PC-9 (cell line): ENCODE measurements at regions of chr2 and their contacts with region 1.

Region 1: GRCh38 chr2:166067229-166067628 is 60.6 kb downstream of the SCN1A start:
- DNase-seq: no peak
- H3K4me3 ChIP-seq: no peak overlapping the region
- H3K27ac ChIP-seq: no peak overlapping the region
- H3K4me1 ChIP-seq: no peaks in the 10 kb centered on the region
- H3K27me3 ChIP-seq: no peaks in the 10 kb centered on the region
- CTCF ChIP-seq: no peak

Region 2: DNA sequence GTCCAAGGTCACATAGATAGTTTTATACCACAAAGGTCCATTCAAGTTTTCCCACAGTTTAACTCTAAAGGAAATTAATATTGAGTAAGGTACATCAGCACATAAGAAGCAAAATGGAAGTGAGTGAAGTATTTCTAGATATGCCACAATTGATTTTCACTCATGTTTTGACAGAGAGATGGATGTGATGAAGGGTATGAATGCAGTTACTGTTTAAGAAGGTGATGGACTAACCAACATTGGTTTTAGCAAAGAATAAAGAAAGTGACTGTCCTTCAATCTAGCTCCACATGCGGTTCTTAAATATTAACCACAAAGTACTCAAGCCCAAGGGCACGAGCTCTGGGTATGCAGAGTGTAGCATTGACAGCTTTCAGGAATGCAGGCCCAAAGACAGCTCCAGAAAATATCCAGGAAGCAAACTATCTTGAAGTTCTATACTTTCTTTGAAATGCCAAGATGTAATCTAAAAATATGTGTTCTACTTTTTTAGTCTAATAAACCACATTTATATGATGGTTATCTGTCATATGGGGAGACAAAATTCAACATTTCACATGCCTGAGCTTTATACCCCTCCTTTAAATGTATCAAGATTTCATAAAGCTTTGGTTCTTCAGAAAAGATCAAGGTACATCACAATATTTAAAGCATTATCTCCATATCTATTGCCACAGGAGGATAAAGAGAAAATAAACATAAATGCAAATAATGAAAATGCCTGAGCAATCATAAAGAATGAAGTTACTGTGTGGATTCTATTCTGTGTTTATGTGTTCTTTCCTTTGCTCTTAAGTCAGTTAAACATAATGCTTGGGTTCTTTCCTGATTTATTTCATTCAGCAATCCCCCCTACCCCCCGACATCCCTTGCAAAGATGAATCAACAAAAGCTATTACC is 67.3 kb after region 1 on chr2:
- CTCF ChIA-PET with region 1: no interaction called
- POLR2A ChIA-PET with region 1: no interaction called
- intact Hi-C with region 1: no loop called
- DNase-seq: no peak
- H3K4me3 ChIP-seq: no peak overlapping the region
- H3K27ac ChIP-seq: no peak overlapping the region
- H3K4me1 ChIP-seq: no peaks in the 10 kb centered on the region
- H3K27me3 ChIP-seq: no peaks in the 10 kb centered on the region
- CTCF ChIP-seq: no peak

Region 3: DNA sequence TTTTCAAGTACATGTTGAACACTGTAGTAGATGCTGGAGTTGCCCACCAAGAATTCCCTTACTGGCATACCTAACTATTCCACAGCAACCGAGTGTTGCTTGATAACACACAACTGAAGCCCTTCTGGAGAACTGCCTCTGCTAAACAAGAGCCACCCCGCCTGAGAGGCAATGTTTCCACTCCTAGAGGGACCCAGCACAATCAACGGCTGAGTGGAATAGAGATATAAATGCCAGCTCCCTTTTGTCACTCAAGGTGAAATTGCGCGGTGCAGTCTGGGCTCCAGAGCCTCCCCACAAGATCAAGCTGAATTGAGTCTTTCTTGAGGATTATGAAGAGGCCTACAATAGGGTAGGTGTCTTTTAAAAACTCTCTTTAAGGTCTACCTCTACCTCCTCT is 357.6 kb after region 1 on chr2:
- CTCF ChIA-PET with region 1: no interaction called
- POLR2A ChIA-PET with region 1: no interaction called
- intact Hi-C with region 1: loop called (anchors 10 kb)
- DNase-seq: no peak
- H3K4me3 ChIP-seq: no peak overlapping the region
- H3K27ac ChIP-seq: no peak overlapping the region
- H3K4me1 ChIP-seq: no peaks in the 10 kb centered on the region
- H3K27me3 ChIP-seq: no peaks in the 10 kb centered on the region
- CTCF ChIP-seq: no peak